HAP-1 (cell line): ENCODE measurements at regions of chr21 and their contacts with region 1.

Region 1: DNA sequence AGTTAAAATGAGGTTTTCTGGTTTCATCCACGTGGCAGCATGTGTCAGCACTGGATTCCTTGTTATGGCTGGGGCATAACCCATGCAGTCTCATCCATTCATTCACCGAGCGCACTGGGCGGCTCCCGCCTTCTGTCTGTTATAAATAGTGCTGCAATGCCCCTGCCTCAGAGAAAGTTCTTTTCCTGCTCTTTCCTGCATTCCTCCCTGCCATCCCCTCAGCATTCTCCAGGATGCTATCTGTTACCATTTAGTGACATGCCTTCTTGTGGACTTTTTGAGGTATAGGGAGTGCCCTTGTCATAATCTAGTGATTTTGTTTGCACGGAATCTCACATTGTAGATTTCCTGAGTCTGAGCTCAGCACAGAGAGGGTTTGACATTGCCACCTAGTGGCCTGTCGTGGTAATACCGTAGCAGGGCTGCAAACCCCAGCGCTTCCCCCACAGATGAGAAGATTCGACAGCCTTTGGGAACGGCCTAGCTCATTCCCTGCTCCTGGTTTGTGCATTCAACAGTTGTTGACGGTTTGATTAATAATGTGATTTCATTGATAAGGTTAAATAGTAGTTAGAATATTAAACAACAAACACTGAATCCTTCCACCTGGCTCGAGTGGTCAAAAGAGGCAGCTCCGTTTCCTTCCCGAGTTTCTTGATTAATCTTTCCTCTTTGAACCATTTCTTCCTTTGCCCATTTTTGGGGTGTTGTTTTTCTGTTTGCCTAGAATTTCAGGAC is 46.3 kb downstream of the UMODL1 start:
- DNase-seq: peak; percentile 55 to 82
- H3K4me3 ChIP-seq: no peak overlapping the region
- H3K4me1 ChIP-seq: no peaks in the 10 kb centered on the region
- H3K27me3 ChIP-seq: peaks cover 19% of the 10 kb centered on the region

Region 2: DNA sequence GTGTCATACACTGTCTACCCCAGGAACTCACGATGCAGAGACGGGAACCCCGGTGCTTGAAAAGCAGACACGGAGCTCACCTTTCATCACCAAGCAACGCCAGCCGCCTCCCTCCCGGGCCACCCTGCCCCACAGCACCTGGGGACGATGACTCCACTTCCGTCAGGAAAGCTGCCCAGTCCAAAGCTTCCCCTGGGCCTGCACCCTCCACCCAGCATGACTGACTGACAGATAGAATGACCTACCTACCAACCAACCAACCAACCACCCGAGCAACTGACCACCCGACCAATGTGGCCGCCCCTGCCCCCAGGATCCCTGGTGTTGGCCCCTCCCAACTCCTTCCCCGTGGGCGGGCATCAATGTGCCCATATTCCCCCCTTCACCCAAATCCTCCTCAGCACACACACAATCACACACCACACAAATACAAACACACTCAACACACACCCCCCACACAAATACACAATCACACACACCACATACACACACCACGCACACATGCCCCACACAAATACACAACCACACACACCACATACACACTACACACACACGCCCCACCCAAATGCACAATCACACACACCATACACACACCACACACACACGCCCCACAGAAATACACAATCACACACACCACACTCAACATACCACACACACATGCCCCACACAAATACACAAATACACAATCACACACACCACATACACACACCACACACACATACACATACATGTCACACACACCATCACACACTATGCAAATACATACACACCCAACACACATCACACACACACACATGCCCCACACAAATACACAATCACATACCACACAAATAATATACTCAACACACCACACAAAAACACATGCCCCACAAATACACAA is 288.7 kb before region 1 on chr21:
- in situ Hi-C with region 1: loop called (anchors 10 kb)
- DNase-seq: no peak
- H3K4me3 ChIP-seq: no peak overlapping the region
- H3K4me1 ChIP-seq: no peaks in the 10 kb centered on the region
- H3K27me3 ChIP-seq: no peaks in the 10 kb centered on the region

Region 3: DNA sequence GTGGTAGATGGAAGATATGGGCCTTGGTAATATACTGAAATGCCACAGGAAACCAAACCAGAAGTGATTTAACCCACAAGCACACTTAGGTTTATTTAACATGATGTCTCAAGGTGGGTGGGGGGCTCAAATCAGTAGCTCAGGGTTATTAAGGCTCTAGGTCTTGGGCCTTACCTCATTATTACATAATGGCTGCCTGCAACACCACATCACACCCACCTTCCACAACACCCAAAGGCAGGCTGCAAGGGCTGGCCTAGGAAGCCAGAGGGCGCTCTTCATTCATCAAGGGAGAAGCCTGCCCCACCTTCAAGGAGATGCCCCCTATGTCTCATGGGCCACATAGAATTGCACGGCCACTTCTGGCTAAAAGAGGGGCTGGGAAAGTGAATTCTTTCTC is 242.9 kb after region 1 on chr21:
- in situ Hi-C with region 1: no loop called
- DNase-seq: no peak
- H3K4me3 ChIP-seq: no peak overlapping the region
- H3K4me1 ChIP-seq: no peaks in the 10 kb centered on the region
- H3K27me3 ChIP-seq: no peaks in the 10 kb centered on the region

Region 4: DNA sequence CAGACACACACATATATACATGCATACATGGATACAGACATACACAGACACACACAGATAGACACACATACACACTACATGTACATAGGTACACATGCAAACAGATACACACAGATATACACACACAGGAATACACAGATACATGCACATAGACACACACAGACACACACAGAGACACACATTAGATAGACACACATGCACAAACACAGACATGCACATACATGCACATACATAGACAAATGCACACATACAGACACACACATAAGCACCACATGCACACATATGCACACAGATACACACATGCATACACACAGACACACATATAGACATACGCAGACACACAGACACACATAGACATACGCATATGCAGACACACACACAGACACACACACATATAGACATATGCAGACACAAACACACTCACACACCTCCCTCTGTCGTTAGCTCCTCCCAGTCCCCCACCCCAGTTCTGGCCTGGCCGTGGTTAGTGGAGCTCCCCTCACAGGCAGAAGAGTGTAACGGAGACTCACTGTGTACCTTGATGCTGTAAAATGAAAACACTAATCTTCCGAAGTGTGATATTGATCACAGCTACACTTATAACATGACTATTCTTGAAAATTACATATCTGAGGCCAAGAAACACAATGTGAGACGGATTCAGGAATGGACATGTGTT is 293.9 kb after region 1 on chr21:
- in situ Hi-C with region 1: no loop called
- DNase-seq: peak in 1 of 2 experiments; percentile 18
- H3K4me3 ChIP-seq: no peak overlapping the region
- H3K4me1 ChIP-seq: no peaks in the 10 kb centered on the region
- H3K27me3 ChIP-seq: peaks cover 2% of the 10 kb centered on the region; the same call in 1 of the 2 replicates